Activated CD8-positive, alpha-beta memory T cell treated with anti-CD3 and anti-CD28 coated beads, Interleukin-2, amount 10 ng/mL, durations not matched to agents 7 days and 5 days (primary cell): ENCODE measurements at regions of chr5 and their contacts with region 1.

Region 1: GRCh38 chr5:14650052-14650451 is 14.5 kb upstream of the OTULIN start:
- DNase-seq: no peak
- ATAC-seq: no peak
- H3K4me3 Mint-ChIP-seq: no peak overlapping the region
- H3K27ac Mint-ChIP-seq: no peak overlapping the region
- H3K4me1 Mint-ChIP-seq: peaks cover 18% of the 10 kb centered on the region
- H3K27me3 Mint-ChIP-seq: peaks cover 20% of the 10 kb centered on the region

Region 2: GRCh38 chr5:14351845-14352712 is 298.0 kb before region 1 on chr5:
- CTCF ChIA-PET with region 1: interaction called, 34 read pairs
- DNase-seq: peak; percentile 73
- ATAC-seq: peak; percentile 93
- H3K4me3 Mint-ChIP-seq: no peak overlapping the region
- H3K27ac Mint-ChIP-seq: no peak overlapping the region
- H3K4me1 Mint-ChIP-seq: peaks cover 12% of the 10 kb centered on the region
- H3K27me3 Mint-ChIP-seq: peaks cover 4% of the 10 kb centered on the region

Region 3: GRCh38 chr5:14357851-14358250 is 292.2 kb before region 1 on chr5:
- CTCF ChIA-PET with region 1: interaction called, 163 read pairs
- DNase-seq: no peak
- ATAC-seq: no peak
- H3K4me3 Mint-ChIP-seq: no peak overlapping the region
- H3K27ac Mint-ChIP-seq: no peak overlapping the region
- H3K4me1 Mint-ChIP-seq: peaks cover 17% of the 10 kb centered on the region
- H3K27me3 Mint-ChIP-seq: peaks cover 5% of the 10 kb centered on the region

Region 4: DNA sequence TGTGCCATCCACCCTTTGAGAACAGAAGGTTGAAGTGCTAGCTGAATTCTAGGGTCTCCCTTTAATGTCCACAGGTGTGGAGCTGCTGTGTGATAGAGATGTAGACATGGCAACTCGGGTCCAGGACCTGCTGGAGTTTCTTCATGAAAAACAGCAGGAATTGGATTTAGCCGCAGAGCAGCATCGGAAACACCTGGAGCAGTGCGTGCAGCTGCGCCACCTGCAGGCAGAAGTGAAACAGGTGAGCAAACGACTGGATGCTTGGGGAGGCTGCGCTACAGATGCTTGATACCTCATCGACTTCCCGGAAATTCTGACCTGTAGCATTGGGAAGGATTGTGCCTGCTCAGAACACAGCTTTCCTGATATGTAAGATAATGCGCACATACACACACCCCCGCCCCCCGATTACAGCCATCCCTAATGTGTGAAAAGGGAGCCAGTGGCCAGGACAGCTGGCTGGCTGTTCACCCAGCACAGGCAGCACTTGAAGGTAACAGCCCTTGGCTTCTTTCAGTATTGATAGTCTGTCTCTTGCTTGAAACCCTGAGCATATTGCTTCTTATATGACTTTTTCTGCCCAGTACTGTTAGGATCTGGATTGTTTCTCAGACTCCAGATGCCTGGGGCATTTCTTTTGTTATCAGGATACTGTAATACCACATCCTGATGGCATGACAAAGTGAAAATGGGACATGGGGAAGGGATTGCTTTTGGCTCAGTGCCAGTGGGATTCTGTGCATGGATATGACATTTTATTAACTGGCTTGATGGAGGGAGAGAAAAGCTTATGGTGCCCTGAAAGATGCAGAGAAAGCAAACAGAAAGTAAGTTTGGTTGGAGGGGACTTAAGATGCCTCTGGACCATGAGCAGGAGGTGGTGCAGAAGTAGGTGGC is 285.2 kb before region 1 on chr5:
- CTCF ChIA-PET with region 1: interaction called, 163 read pairs
- DNase-seq: no peak
- ATAC-seq: no peak
- H3K4me3 Mint-ChIP-seq: no peak overlapping the region
- H3K27ac Mint-ChIP-seq: peak overlapping the region; percentile 75
- H3K4me1 Mint-ChIP-seq: peaks cover 58% of the 10 kb centered on the region
- H3K27me3 Mint-ChIP-seq: peaks cover 5% of the 10 kb centered on the region

Region 5: DNA sequence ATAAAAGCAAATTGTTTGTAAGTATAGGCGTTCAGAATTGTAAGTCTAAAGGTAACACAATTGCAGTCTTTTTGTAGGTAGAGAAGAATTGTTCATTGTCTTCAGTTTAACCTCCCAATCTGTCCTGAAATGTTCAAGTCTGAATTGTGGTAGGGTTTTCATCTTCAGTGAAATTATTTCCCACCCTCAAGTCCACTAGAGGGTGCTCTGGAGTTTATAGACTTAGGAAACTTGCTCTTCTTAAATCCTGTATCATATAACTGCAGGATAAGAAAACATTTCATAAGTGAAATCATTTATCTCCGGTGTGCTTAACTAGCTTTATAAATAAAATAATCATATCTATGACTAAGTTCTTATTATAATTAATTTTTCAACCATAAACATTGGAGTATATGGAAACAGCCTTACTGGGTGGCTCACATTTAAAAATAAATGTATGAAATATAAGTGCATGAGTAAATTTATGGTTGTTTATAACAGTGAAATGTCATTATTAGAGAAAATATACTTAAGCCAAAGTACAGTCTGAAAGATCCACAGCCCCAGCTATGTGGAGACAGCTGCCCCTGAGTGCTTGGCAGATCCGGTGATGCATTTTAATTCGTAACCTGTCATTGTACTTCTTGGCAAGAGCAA is 250.9 kb before region 1 on chr5:
- CTCF ChIA-PET with region 1: interaction called, 49 read pairs
- DNase-seq: no peak
- ATAC-seq: peak; percentile 73
- H3K4me3 Mint-ChIP-seq: no peak overlapping the region
- H3K27ac Mint-ChIP-seq: no peak overlapping the region
- H3K4me1 Mint-ChIP-seq: peaks cover 38% of the 10 kb centered on the region
- H3K27me3 Mint-ChIP-seq: peaks cover 12% of the 10 kb centered on the region

Region 6: DNA sequence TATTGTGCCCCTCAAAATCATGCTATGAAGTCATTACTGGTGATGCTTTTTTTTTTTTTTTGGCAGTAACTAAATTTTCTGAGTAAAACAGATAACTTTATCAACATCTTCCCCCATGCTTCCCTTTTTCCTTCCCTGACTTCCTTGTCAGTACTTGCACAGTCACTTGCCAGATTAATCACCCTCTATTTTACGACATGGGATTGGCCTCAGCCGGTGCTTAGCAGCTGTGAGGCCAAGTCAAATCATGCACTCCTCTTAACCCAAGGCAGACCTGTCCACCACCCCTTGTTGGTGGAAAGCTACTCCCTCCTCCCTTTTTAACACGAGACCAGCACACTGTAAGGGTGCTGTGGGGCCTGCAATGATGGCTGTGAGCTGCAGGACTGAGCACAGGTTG is 186.4 kb before region 1 on chr5:
- CTCF ChIA-PET with region 1: no interaction called
- DNase-seq: no peak
- ATAC-seq: no peak
- H3K4me3 Mint-ChIP-seq: no peak overlapping the region
- H3K27ac Mint-ChIP-seq: no peak overlapping the region
- H3K4me1 Mint-ChIP-seq: no peaks in the 10 kb centered on the region
- H3K27me3 Mint-ChIP-seq: peaks cover 4% of the 10 kb centered on the region

Region 7: GRCh38 chr5:14595189-14595588 is 54.9 kb before region 1 on chr5:
- CTCF ChIA-PET with region 1: interaction called, 26 read pairs
- DNase-seq: peak; percentile 80
- ATAC-seq: peak; percentile 79
- H3K4me3 Mint-ChIP-seq: peak overlapping the region; percentile 64
- H3K27ac Mint-ChIP-seq: peak overlapping the region; percentile 98
- H3K4me1 Mint-ChIP-seq: peaks cover 87% of the 10 kb centered on the region
- H3K27me3 Mint-ChIP-seq: no peaks in the 10 kb centered on the region

Region 8: GRCh38 chr5:14615344-14615743 is 34.7 kb before region 1 on chr5:
- CTCF ChIA-PET with region 1: no interaction called
- DNase-seq: no peak
- ATAC-seq: no peak
- H3K4me3 Mint-ChIP-seq: no peak overlapping the region
- H3K27ac Mint-ChIP-seq: no peak overlapping the region
- H3K4me1 Mint-ChIP-seq: peaks cover 2% of the 10 kb centered on the region
- H3K27me3 Mint-ChIP-seq: no peaks in the 10 kb centered on the region

Region 9: GRCh38 chr5:14665949-14666348 is 15.9 kb after region 1 on chr5:
- CTCF ChIA-PET with region 1: interaction called, 10 read pairs
- DNase-seq: peak; percentile 78
- ATAC-seq: peak; percentile 31
- H3K4me3 Mint-ChIP-seq: peak overlapping the region; percentile 96
- H3K27ac Mint-ChIP-seq: peak overlapping the region; percentile 94
- H3K4me1 Mint-ChIP-seq: peaks cover 66% of the 10 kb centered on the region
- H3K27me3 Mint-ChIP-seq: no peaks in the 10 kb centered on the region